ENCODE measurements at regions of chr1 and their contacts with region 1.

Region 1: GRCh38 chr1:197902454-197903195 is at the start of gene C1orf53:
- DNase-seq: peak; percentile 63
- ATAC-seq: peak; percentile 94
- H3K4me3 ChIP-seq: peak within 1 kb of the TSS; percentile 58 to 76
- H3K27ac ChIP-seq: peak within 1 kb of the TSS; percentile 84
- H3K4me1 ChIP-seq: peaks cover 3 to 16% of the 10 kb centered on the region in 2 experiments; a peak in 2 of 4 replicates
- H3K27me3 ChIP-seq: no peaks in the 10 kb centered on the region
- CTCF ChIP-seq: no peak
- POLR2A ChIP-seq: peak; percentile 55
- RAD21 ChIP-seq: no peak
- total RNA-seq, gene C1orf53: 4.2 TPM

Region 2: GRCh38 chr1:197915862-197916499 is 13.4 kb after region 1 on chr1:
- CTCF ChIA-PET with region 1: interaction called, 19 read pairs
- POLR2A ChIA-PET with region 1: interaction called, 3 read pairs
- RAD21 ChIA-PET with region 1: no interaction called
- intact Hi-C with region 1: no loop called
- DNase-seq: peak; percentile 53
- ATAC-seq: peak; percentile 97
- H3K4me3 ChIP-seq: peak overlapping the region; percentile 36 to 54
- H3K27ac ChIP-seq: no peak overlapping the region
- H3K4me1 ChIP-seq: peaks cover 5 to 15% of the 10 kb centered on the region in 2 experiments; a peak in 3 of 4 replicates
- H3K27me3 ChIP-seq: no peaks in the 10 kb centered on the region
- CTCF ChIP-seq: peak; percentile 65 to 78 (median 75); a peak in 5 of 6 replicates
- POLR2A ChIP-seq: no peak
- RAD21 ChIP-seq: peak; percentile 57